Activated CD4-positive, alpha-beta memory T cell treated with anti-CD3 and anti-CD28 coated beads for 36 hours (primary cell): ENCODE measurements at regions of chr7 and their contacts with region 1.

Region 1: DNA sequence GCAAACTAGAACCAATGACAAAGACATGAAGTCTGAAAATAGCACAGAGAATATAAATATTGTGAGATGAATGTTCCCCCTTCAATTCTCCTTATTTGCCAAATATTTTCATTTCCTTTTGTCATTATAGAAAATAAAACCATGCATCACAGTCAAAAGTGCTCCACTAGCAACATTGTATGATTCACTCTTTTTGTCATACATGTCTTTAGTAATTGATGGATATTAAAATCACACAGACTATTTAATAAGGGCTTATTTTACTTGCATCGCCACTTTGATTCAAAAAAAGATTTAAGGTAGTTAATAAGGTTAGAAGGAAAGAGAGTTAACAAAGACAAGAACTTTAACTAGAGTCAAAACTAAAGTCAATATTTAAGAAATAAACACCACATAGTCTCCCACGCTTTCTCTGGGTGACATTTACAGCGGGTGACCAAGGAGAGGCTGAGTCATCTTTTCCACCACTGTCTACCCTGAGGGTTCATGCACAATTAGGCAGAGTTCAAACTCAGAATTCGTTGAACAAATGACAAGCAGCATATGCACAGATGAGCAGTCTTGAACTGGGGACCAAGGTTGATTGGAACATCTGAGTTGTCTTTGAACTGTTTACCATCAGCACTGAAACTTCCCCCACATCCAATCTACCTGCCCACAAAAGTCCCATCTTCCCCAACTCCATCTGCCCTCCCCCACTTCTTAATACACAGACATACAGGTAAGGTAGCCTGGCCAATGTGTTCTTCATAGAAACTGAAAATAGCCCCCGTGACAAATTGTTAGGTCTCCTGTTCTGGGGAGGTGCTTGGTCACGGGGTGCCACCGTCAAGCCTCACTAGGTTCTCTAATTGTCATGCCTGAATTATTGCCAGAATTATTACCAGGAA is 42.5 kb downstream of the C7orf25 start:
- DNase-seq: peak; percentile 77
- H3K4me3 Mint-ChIP-seq: peak overlapping the region; percentile 27
- H3K27ac Mint-ChIP-seq: peak overlapping the region; percentile 69
- H3K4me1 Mint-ChIP-seq: peaks cover 24% of the 10 kb centered on the region
- H3K27me3 Mint-ChIP-seq: peaks cover 19% of the 10 kb centered on the region

Region 2: DNA sequence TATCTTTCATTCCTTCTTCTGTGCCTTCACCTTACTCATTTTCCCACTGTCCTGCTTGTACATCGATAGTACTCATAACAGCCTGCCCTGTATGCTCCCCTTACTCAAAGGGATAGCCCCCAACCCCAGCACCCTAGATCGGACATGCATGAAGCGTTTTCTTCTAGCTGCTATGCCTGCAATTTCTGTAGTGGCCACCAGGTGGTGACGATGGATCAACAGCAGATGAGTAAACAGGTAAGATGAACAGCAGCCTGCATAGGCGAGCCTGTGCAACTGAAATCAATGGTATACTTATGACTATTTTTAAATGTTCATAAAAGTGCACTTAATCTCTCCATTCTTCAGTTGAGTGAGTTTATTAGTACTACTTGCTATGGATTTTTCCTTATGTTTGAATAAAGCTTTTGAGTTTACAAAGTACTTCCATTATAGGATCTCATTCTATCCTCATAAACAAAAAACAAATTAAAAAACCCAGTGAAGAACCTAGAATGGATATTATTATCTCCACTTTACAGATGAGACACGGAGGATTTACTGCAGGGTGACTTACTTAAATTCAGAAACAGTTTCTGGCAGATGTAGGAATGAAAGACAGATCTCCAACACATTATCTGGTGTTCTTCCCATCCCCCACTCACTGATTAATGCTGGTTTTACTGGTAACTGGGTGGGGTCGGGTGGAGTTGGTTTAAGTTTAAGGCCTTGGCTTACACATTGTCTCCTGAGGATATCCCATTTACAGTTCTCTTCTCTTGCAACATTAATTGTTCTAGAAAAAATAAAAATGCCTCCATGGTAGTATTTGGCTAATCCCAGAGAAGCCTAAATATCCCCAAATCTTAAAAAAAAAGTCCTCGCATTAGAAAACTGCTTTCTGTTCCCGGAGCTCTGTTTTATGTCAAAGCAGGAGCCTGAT is 854.5 kb before region 1 on chr7:
- CTCF ChIA-PET with region 1: no interaction called
- POLR2A ChIA-PET with region 1: no interaction called
- intact Hi-C with region 1: loop called (anchors 10 kb)
- DNase-seq: peak; percentile 50
- H3K4me3 Mint-ChIP-seq: no peak overlapping the region
- H3K27ac Mint-ChIP-seq: no peak overlapping the region
- H3K4me1 Mint-ChIP-seq: no peaks in the 10 kb centered on the region
- H3K27me3 Mint-ChIP-seq: peaks cover 12% of the 10 kb centered on the region

Region 3: GRCh38 chr7:42911454-42912447 is 42.4 kb after region 1 on chr7 and contains the start of gene C7orf25:
- CTCF ChIA-PET with region 1: no interaction called
- POLR2A ChIA-PET with region 1: no interaction called
- intact Hi-C with region 1: loop called (anchors 1 kb)
- DNase-seq: peak; percentile 97
- H3K4me3 Mint-ChIP-seq: peak within 1 kb of the TSS; percentile 94
- H3K27ac Mint-ChIP-seq: peak within 1 kb of the TSS; percentile 79
- H3K4me1 Mint-ChIP-seq: peaks cover 52% of the 10 kb centered on the region
- H3K27me3 Mint-ChIP-seq: no peaks in the 10 kb centered on the region
- total RNA-seq, gene C7orf25: 3.6 to 4.3 TPM